GM12878 (cell line): ENCODE measurements at regions of chr5 and their contacts with region 1.

Region 1: DNA sequence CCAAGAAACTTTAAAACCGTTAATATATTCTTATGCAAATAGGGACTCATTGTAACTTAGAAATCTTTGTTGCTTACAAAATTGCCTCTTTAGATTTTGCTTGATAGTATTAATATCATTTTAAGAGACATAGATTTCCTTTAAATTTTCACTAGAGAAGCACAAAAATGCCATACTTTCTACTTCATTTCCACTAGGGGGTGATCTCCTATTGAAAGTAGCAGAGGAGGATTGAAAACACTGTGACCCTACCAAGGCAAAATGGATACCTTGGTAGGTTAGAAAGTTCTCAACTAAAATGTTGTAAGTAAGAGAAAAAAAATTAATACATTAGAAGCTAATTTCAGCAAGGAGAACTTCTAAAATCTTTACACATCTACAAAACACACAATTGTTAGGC is 204.9 kb downstream of the CHSY3 start:
- DNase-seq: no peak
- ATAC-seq: peak; percentile 78
- H3K4me3 ChIP-seq: no peak overlapping the region
- H3K27ac ChIP-seq: no peak overlapping the region
- H3K4me1 ChIP-seq: peaks cover 6% of the 10 kb centered on the region; the same call in 1 of the 2 replicates
- H3K27me3 ChIP-seq: no peaks in the 10 kb centered on the region
- CTCF ChIP-seq: peak; percentile 42 to 54 (median 45); a peak in 4 of 6 replicates
- EP300 ChIP-seq: no peak
- POLR2A ChIP-seq: no peak
- RAD21 ChIP-seq: peak; percentile 64

Region 2: GRCh38 chr5:130126746-130127145 is 17.6 kb after region 1 on chr5:
- CTCF ChIA-PET with region 1: interaction called, 11 read pairs
- POLR2A ChIA-PET with region 1: no interaction called
- RAD21 ChIA-PET with region 1: no interaction called
- SMC1A ChIA-PET with region 1: no interaction called
- in situ Hi-C with region 1: no loop called
- intact Hi-C with region 1: no loop called
- DNase-seq: no peak
- ATAC-seq: no peak
- H3K4me3 ChIP-seq: no peak overlapping the region
- H3K27ac ChIP-seq: no peak overlapping the region
- H3K4me1 ChIP-seq: no peaks in the 10 kb centered on the region
- H3K27me3 ChIP-seq: no peaks in the 10 kb centered on the region
- CTCF ChIP-seq: no peak
- EP300 ChIP-seq: no peak
- POLR2A ChIP-seq: no peak
- RAD21 ChIP-seq: no peak

Region 3: DNA sequence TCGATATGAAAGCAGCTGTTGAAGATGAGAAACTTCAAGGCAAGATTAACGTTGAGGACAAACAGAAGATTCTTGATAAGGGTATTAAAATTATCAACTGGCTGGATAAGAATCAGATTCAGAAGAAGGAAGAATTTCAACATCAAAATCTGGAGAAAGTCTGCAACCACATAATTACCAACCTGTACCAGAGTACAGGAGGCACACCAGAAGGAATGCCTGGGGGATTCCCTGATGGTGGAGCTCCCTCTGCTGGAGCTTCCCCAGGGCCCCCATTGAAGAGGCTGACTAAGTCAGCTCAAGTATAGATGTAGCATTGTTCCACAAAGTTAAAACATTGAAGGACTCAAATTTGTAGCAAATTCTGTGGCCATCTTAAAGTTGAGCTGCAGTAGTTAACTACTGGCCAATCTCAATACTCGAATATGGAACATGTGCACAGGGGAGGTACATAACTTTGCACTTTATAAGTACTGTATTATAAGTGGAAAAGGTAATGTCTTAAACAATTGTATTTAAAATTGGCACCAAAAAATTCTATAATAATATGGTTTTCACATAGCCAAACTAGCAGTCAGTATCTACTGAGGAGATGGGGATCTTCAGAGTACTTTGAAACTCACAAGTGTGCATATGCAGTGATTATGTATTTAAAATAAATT is 32.6 kb after region 1 on chr5:
- CTCF ChIA-PET with region 1: interaction called, 66 read pairs
- POLR2A ChIA-PET with region 1: no interaction called
- RAD21 ChIA-PET with region 1: interaction called, 12 read pairs
- SMC1A ChIA-PET with region 1: interaction called, 30 read pairs
- in situ Hi-C with region 1: no loop called
- intact Hi-C with region 1: loop called (anchors 1 kb)
- DNase-seq: no peak
- ATAC-seq: peak; percentile 90
- H3K4me3 ChIP-seq: no peak overlapping the region
- H3K27ac ChIP-seq: no peak overlapping the region
- H3K4me1 ChIP-seq: no peaks in the 10 kb centered on the region
- H3K27me3 ChIP-seq: no peaks in the 10 kb centered on the region
- CTCF ChIP-seq: peak; percentile 61 to 68 (median 66)
- EP300 ChIP-seq: no peak
- POLR2A ChIP-seq: no peak
- RAD21 ChIP-seq: peak; percentile 51

Region 4: DNA sequence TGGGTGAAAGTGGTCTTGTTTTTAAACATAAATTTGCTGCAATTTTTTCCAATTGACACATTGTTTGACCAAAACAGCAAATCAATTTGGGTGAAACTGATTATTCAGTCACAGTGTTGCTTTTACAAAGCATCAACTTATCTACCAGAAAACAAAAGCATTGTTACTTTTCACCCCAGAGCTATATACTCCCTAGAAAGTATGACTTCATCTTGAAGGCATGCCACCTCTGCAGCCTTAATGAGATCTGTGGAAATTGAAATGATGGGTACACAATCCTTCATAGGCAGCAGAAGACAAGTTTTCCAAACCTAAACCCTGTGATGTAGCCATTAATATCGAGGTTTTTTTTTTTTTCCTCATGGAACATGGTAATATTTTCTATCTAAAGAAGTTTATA is 411.1 kb after region 1 on chr5:
- CTCF ChIA-PET with region 1: no interaction called
- POLR2A ChIA-PET with region 1: no interaction called
- RAD21 ChIA-PET with region 1: no interaction called
- SMC1A ChIA-PET with region 1: no interaction called
- in situ Hi-C with region 1: no loop called
- intact Hi-C with region 1: no loop called
- DNase-seq: no peak
- ATAC-seq: no peak
- H3K4me3 ChIP-seq: no peak overlapping the region
- H3K27ac ChIP-seq: no peak overlapping the region
- H3K4me1 ChIP-seq: no peaks in the 10 kb centered on the region
- H3K27me3 ChIP-seq: no peaks in the 10 kb centered on the region
- CTCF ChIP-seq: no peak
- EP300 ChIP-seq: no peak
- POLR2A ChIP-seq: no peak
- RAD21 ChIP-seq: no peak